Heart right ventricle (tissue), 16 donors: ENCODE measurements at regions of chr1 and their contacts with region 1.

Region 1: GRCh38 chr1:217191441-217191840 is 439.4 kb downstream of the GPATCH2 start:
- DNase-seq: no peak
- ATAC-seq: no peak
- H3K4me3 ChIP-seq: no peak overlapping the region
- H3K27ac ChIP-seq: no peak overlapping the region
- H3K4me1 ChIP-seq: peaks cover 0 to 3% (median 0%) of the 10 kb centered on the region in 9 donors
- H3K27me3 ChIP-seq: no peaks in the 10 kb centered on the region
- CTCF ChIP-seq: no peak

Region 2: DNA sequence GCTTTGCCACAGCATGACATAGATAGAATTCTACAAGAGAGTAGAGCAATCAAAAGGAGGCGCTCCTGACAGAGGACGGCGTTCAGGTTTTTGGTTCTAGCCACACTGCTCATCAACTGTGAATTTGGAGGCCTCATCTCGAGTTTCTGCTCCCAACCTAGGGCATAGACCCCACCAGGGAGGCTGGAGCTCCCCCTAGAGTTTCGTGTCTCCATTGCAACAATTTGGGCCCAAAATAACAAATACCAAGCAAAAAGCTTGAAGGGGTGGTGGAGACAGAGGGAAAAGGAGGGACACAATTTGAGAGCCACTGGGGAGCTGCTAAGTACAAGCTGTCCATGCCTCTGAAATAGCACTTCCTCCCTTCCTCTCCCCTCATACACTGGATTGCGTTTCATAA is 142.5 kb after region 1 on chr1:
- intact Hi-C with region 1: loop called in 1 of 10 experiments (anchors 10 kb)
- DNase-seq: peak in 1 of 2 donors; percentile 5
- ATAC-seq: no peak
- H3K4me3 ChIP-seq: no peak overlapping the region
- H3K27ac ChIP-seq: no peak overlapping the region
- H3K4me1 ChIP-seq: peaks cover 0 to 13% (median 0%) of the 10 kb centered on the region in 9 donors
- H3K27me3 ChIP-seq: no peaks in the 10 kb centered on the region
- CTCF ChIP-seq: peak in 8 of 9 donors; percentile 13 to 55 (median 50)